ENCODE measurements at regions of chr4 and their contacts with region 1.

Region 1: DNA sequence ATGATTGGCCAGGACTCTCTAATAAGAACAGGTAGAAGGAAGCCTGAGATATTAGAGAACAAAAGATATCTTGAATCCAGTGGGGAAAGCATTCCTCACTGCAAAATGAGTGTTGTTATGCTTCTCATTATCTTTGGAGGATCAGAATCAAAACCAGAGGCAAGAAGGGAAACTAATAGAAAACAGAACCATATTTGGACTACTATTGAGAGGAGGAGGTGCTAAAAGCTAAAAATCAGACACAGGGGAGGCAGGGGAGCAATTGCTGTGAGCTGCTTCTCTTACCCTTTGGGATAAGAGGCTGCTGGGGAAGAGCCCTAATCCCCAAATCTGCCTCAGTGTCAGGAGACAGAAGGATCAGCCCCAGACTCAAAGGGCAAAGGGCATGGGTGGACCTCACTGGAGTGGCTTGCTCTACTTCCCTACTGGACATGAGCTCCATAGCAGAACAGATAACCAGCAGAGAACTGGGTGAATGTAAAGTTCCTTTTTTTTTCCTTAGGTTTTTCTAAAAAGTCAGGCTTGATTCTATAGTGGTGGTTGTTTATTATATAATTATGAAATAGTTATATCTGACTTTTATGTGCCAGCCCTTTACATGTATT is 60.1 kb downstream of the SEPTIN11 start:
- DNase-seq: no peak

Region 2: DNA sequence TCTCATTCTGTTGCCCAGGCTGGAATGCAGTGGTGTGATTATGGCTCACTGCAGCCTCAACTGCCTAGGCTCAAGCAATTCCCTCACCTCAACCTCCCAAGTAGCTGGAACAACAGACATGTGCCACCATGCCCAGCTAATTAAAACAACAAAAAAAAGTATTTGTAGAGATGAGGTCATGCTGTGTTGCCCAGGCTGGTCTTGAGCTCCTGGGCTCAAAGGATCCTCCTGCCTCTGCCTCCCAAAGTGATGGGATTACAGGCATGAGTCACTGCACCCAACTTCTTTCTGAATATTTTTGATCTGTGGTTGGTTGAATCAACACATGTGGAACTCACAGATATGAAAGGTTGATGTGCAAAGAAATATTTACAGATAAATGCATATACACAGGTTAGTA is 78.5 kb before region 1 on chr4:
- CTCF ChIA-PET with region 1: no interaction called
- POLR2A ChIA-PET with region 1: no interaction called
- DNase-seq: no peak

Region 3: GRCh38 chr4:78569291-78569821 is 1559.7 kb after region 1 on chr4:
- CTCF ChIA-PET with region 1: interaction called, 10 read pairs
- POLR2A ChIA-PET with region 1: no interaction called
- DNase-seq: no peak